B cell (primary cell): ENCODE measurements at regions of chr16 and their contacts with region 1.

Region 1: DNA sequence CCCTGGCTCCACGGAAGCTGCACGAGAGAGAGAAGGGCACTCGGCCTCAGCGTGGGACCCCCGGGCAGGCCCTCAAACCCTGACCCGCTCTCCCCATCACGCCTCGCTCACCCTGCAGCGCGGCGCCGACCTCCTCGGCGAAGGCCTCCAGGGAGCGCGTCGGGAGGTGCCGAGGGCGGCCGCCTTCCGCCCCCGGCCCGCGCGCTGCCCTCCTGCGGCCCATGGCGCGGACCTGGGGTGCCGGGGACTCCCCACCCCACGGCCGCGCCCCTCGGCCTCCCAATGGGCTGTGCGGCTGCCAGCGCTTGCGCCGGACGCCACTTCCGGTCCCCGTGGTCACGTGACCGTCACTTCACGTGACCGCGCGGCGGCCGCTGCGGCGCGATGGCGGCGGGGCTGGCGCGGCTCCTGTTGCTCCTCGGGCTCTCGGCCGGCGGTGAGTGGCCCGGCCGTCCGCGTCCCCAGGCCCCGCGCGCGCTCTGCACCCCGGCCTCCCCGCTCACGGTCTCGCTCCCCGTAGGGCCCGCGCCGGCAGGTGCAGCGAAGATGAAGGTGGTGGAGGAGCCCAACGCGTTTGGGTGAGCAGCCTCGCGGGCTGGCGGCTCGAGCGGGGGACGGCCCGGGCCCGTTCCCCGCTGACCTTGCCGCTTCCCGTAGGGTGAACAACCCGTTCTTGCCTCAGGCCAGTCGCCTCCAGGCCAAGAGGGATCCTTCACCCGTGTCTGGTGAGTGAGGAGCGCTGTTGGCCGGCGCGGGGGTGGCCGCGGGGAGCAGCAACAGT is at the starts of genes GNPTG and TSR3:
- DNase-seq: peak; percentile 94
- ATAC-seq: peak; percentile 96
- H3K4me3 ChIP-seq: peak within 1 kb of the TSS; percentile 71 to 84 (median 77)
- H3K4me3 Mint-ChIP-seq: peak within 1 kb of the TSS; percentile 89
- H3K27ac ChIP-seq: peak within 1 kb of the TSS in 1 of 2 donors; percentile 77
- H3K27ac Mint-ChIP-seq: peak within 1 kb of the TSS; percentile 88
- H3K4me1 ChIP-seq: peaks cover 17 to 21% of the 10 kb centered on the region in 2 donors
- H3K4me1 Mint-ChIP-seq: peaks cover 40% of the 10 kb centered on the region
- H3K27me3 ChIP-seq: no peaks in the 10 kb centered on the region
- H3K27me3 Mint-ChIP-seq: no peaks in the 10 kb centered on the region
- CTCF ChIP-seq: no peak
- total RNA-seq, gene GNPTG: 69.1 and 76.0 TPM in 2 replicates
- total RNA-seq, gene TSR3: 42.3 and 43.7 TPM in 2 replicates

Region 2: GRCh38 chr16:1408171-1408837 is 56.5 kb after region 1 on chr16:
- CTCF ChIA-PET with region 1: no interaction called
- POLR2A ChIA-PET with region 1: no interaction called
- intact Hi-C with region 1: loop called (anchors 10 kb)
- DNase-seq: peak; percentile 97
- ATAC-seq: peak; percentile 94
- H3K4me3 ChIP-seq: peak overlapping the region in 4 of 5 experiments; percentile 30 to 57 (median 52)
- H3K4me3 Mint-ChIP-seq: peak overlapping the region; percentile 83
- H3K27ac ChIP-seq: peak overlapping the region; percentile 56 to 60
- H3K27ac Mint-ChIP-seq: peak overlapping the region; percentile 84
- H3K4me1 ChIP-seq: peaks cover 14 to 21% of the 10 kb centered on the region in 2 donors
- H3K4me1 Mint-ChIP-seq: peaks cover 25% of the 10 kb centered on the region
- H3K27me3 ChIP-seq: no peaks in the 10 kb centered on the region
- H3K27me3 Mint-ChIP-seq: no peaks in the 10 kb centered on the region
- CTCF ChIP-seq: no peak